ENCODE measurements at regions of chrX and their contacts with region 1.

Region 1: DNA sequence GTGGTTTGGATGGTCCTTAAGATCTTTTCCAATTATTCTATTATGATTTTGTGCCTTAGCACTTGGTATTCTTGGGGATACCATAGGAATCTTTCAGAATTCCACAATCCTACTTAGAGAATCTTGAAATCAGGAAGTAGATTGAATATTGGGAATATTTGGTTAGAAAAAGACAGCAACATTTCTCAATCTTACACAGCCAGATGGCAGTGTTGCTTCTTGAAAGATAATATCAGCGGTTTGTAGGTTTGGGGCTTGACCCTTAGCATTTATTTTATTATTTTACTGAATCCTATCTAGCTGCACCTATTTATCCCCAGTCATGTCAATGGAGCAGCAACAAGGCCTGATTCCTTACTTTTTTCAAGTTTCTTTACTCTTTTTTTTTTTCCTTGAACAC is 28.6 kb downstream of the MAGEB1 start:
- DNase-seq: peak; percentile 6
- H3K4me3 ChIP-seq: no peak overlapping the region
- H3K27ac ChIP-seq: no peak overlapping the region
- H3K4me1 ChIP-seq: no peaks in the 10 kb centered on the region
- H3K27me3 ChIP-seq: peaks cover 2% of the 10 kb centered on the region
- CTCF ChIP-seq: peak; percentile 39 to 52

Region 2: GRCh38 chrX:30488092-30488491 is 212.6 kb after region 1 on chrX:
- CTCF ChIA-PET with region 1: no interaction called
- dilution Hi-C with region 1: no loop called
- in situ Hi-C with region 1: no loop called
- intact Hi-C with region 1: loop called (anchors 1 kb)
- DNase-seq: no peak
- H3K4me3 ChIP-seq: no peak overlapping the region
- H3K27ac ChIP-seq: no peak overlapping the region
- H3K4me1 ChIP-seq: no peaks in the 10 kb centered on the region
- H3K27me3 ChIP-seq: no peaks in the 10 kb centered on the region
- CTCF ChIP-seq: peak in 1 of 2 donors; percentile 45